PC-3 (cell line): ENCODE measurements at regions of chr17 and their contacts with region 1.

Region 1: GRCh38 chr17:68089887-68090286 is 54.4 kb downstream of the KPNA2 start:
- DNase-seq: peak; percentile 84
- ATAC-seq: peak; percentile 60
- H3K4me3 ChIP-seq: no peak overlapping the region
- H3K27ac ChIP-seq: no peak overlapping the region
- H3K4me1 ChIP-seq: no peaks in the 10 kb centered on the region
- H3K27me3 ChIP-seq: no peaks in the 10 kb centered on the region
- CTCF ChIP-seq: no peak

Region 2: DNA sequence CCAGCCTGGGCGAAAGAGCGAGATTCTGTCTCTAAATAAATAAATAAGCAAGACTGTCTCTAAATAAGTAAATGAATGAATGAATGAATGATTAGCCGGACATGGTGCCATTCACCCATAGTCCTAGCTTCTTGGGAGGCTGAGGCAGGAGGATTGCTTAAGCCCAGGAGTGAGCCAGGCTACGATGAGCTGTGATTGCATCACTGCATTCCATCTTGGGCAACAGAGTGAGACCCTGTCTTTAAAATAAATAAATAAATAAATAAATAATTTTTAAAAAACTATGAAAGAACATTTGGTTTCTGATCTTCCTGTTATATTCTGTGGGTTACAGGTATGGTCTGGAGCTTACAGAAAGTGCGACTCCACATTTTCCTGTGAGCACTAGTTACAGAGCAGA is 158.7 kb before region 1 on chr17:
- CTCF ChIA-PET with region 1: no interaction called
- POLR2A ChIA-PET with region 1: interaction called, 17 read pairs
- intact Hi-C with region 1: no loop called
- DNase-seq: no peak
- ATAC-seq: no peak
- H3K4me3 ChIP-seq: no peak overlapping the region
- H3K27ac ChIP-seq: no peak overlapping the region
- H3K4me1 ChIP-seq: no peaks in the 10 kb centered on the region
- H3K27me3 ChIP-seq: no peaks in the 10 kb centered on the region
- CTCF ChIP-seq: no peak

Region 3: GRCh38 chr17:68074279-68074678 is 15.6 kb before region 1 on chr17:
- CTCF ChIA-PET with region 1: no interaction called
- POLR2A ChIA-PET with region 1: no interaction called
- intact Hi-C with region 1: loop called (anchors 1 kb)
- DNase-seq: no peak
- ATAC-seq: no peak
- H3K4me3 ChIP-seq: no peak overlapping the region
- H3K27ac ChIP-seq: no peak overlapping the region
- H3K4me1 ChIP-seq: no peaks in the 10 kb centered on the region
- H3K27me3 ChIP-seq: no peaks in the 10 kb centered on the region
- CTCF ChIP-seq: no peak

Region 4: GRCh38 chr17:68441064-68441770 is 351.3 kb after region 1 on chr17:
- CTCF ChIA-PET with region 1: no interaction called
- POLR2A ChIA-PET with region 1: no interaction called
- intact Hi-C with region 1: no loop called
- DNase-seq: no peak
- ATAC-seq: no peak
- H3K4me3 ChIP-seq: no peak overlapping the region
- H3K27ac ChIP-seq: no peak overlapping the region
- H3K4me1 ChIP-seq: peaks cover 4% of the 10 kb centered on the region
- H3K27me3 ChIP-seq: no peaks in the 10 kb centered on the region
- CTCF ChIP-seq: no peak